Psoas muscle (tissue), 8 donors: ENCODE measurements at regions of chr7 and their contacts with region 1.

Region 1: GRCh38 chr7:101953248-101953819 is 135.9 kb downstream of the CUX1 start:
- DNase-seq: peak; percentile 57 to 82
- ATAC-seq: peak; percentile 83 to 86 (median 84)
- H3K4me3 ChIP-seq: no peak overlapping the region
- H3K27ac ChIP-seq: peak overlapping the region; percentile 92
- H3K4me1 ChIP-seq: peaks cover 66% of the 10 kb centered on the region
- H3K27me3 ChIP-seq: no peaks in the 10 kb centered on the region
- CTCF ChIP-seq: no peak

Region 2: GRCh38 chr7:101905218-101905865 is 48.0 kb before region 1 on chr7:
- intact Hi-C with region 1: loop called in 1 of 2 experiments (anchors 5 kb)
- DNase-seq: no peak
- ATAC-seq: no peak
- H3K4me3 ChIP-seq: no peak overlapping the region
- H3K27ac ChIP-seq: peak overlapping the region; percentile 24
- H3K4me1 ChIP-seq: peaks cover 38% of the 10 kb centered on the region
- H3K27me3 ChIP-seq: no peaks in the 10 kb centered on the region
- CTCF ChIP-seq: no peak

Region 3: GRCh38 chr7:102140952-102141370 is 187.6 kb after region 1 on chr7:
- intact Hi-C with region 1: no loop called
- DNase-seq: no peak
- ATAC-seq: no peak
- H3K4me3 ChIP-seq: no peak overlapping the region
- H3K27ac ChIP-seq: no peak overlapping the region
- H3K4me1 ChIP-seq: peaks cover 5% of the 10 kb centered on the region
- H3K27me3 ChIP-seq: no peaks in the 10 kb centered on the region
- CTCF ChIP-seq: no peak